Sigmoid colon (tissue), 7 donors: ENCODE measurements at regions of chr19 and their contacts with region 1.

Region 1: GRCh38 chr19:10431943-10432735 is 11.8 kb downstream of the PDE4A start:
- DNase-seq: peak; percentile 82
- H3K4me3 ChIP-seq: peak overlapping the region; percentile 48 to 71 (median 70)
- H3K27ac ChIP-seq: peak overlapping the region; percentile 42 to 77 (median 64)
- H3K4me1 ChIP-seq: peaks cover 0 to 29% (median 26%) of the 10 kb centered on the region in 4 donors
- H3K27me3 ChIP-seq: no peaks in the 10 kb centered on the region
- CTCF ChIP-seq: no peak
- EP300 ChIP-seq: no peak
- POLR2A ChIP-seq: no peak

Region 2: GRCh38 chr19:10478903-10479384 is 46.8 kb after region 1 on chr19:
- intact Hi-C with region 1: loop called (anchors 5 kb)
- DNase-seq: peak; percentile 98
- H3K4me3 ChIP-seq: peak overlapping the region; percentile 27 to 54 (median 41)
- H3K27ac ChIP-seq: peak overlapping the region; percentile 9 to 62 (median 38)
- H3K4me1 ChIP-seq: peaks cover 0 to 15% (median 12%) of the 10 kb centered on the region in 4 donors
- H3K27me3 ChIP-seq: no peaks in the 10 kb centered on the region
- CTCF ChIP-seq: peak in 3 of 4 experiments; percentile 6 to 86 (median 16)
- EP300 ChIP-seq: no peak
- POLR2A ChIP-seq: no peak